B cell (primary cell): ENCODE measurements at regions of chr15 and their contacts with region 1.

Region 1: DNA sequence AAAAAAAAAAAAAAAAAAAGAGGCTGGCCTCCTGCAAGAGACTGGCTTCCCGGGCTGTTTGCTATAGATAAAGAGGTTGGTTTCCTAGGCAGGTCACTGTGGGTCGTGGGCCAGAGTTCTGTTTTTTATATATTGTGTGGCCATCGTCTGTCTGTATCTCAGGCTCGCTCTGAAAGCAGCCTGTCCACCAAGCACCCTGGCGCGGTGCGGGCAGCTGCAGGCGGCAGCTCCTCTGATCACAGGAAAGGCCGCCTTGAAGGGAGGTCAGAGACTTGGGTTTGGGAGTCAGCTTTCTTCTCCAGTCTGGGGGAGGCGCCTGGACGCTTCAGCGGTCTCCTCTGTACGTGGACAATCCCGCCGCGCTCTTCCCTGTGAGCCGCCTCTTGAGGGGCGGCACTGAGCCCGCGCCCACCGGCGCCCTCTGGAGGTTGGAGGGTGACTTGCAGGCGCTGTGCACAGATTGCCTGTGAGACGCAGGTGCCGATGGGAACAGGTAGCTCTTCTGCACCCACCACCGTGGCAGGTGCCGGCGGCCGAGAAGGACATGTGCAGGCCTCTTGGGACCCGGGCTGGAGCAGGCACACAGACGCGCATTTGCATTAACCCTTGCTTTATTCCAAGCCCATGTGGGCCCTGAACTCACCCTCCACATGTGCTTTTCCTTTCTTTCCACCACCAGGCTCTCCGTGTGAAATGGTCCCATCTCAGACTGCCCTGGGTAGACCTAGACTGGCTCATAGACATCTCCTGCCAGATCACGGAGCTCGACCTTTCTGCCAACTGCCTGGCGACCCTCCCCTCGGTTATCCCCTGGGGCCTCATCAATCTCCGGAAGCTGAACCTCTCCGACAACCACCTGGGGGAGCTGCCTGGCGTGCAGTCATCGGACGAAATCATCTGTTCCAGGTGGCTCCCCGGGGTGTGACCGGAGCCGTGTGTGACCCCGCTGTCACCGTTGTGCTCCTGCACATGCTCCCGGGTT is 89.3 kb downstream of the LRRK1 start:
- DNase-seq: peak; percentile 91
- ATAC-seq: peak; percentile 95
- H3K4me3 ChIP-seq: peak overlapping the region; percentile 16 to 78 (median 59)
- H3K4me3 Mint-ChIP-seq: peak overlapping the region; percentile 92
- H3K27ac ChIP-seq: no peak overlapping the region
- H3K27ac Mint-ChIP-seq: peak overlapping the region; percentile 42
- H3K4me1 ChIP-seq: peaks cover 10 to 20% of the 10 kb centered on the region in 2 donors
- H3K4me1 Mint-ChIP-seq: peaks cover 20% of the 10 kb centered on the region
- H3K27me3 ChIP-seq: no peaks in the 10 kb centered on the region
- H3K27me3 Mint-ChIP-seq: no peaks in the 10 kb centered on the region
- CTCF ChIP-seq: peak; percentile 96

Region 2: GRCh38 chr15:100627789-100628395 is 380.6 kb before region 1 on chr15:
- CTCF ChIA-PET with region 1: interaction called, 25 read pairs
- POLR2A ChIA-PET with region 1: no interaction called
- intact Hi-C with region 1: loop called (anchors 1 kb)
- DNase-seq: peak; percentile 81
- ATAC-seq: peak; percentile 71
- H3K4me3 ChIP-seq: no peak overlapping the region
- H3K4me3 Mint-ChIP-seq: no peak overlapping the region
- H3K27ac ChIP-seq: no peak overlapping the region
- H3K27ac Mint-ChIP-seq: no peak overlapping the region
- H3K4me1 ChIP-seq: no peaks in the 10 kb centered on the region
- H3K4me1 Mint-ChIP-seq: peaks cover 2% of the 10 kb centered on the region
- H3K27me3 ChIP-seq: no peaks in the 10 kb centered on the region
- H3K27me3 Mint-ChIP-seq: no peaks in the 10 kb centered on the region
- CTCF ChIP-seq: peak; percentile 96

Region 3: DNA sequence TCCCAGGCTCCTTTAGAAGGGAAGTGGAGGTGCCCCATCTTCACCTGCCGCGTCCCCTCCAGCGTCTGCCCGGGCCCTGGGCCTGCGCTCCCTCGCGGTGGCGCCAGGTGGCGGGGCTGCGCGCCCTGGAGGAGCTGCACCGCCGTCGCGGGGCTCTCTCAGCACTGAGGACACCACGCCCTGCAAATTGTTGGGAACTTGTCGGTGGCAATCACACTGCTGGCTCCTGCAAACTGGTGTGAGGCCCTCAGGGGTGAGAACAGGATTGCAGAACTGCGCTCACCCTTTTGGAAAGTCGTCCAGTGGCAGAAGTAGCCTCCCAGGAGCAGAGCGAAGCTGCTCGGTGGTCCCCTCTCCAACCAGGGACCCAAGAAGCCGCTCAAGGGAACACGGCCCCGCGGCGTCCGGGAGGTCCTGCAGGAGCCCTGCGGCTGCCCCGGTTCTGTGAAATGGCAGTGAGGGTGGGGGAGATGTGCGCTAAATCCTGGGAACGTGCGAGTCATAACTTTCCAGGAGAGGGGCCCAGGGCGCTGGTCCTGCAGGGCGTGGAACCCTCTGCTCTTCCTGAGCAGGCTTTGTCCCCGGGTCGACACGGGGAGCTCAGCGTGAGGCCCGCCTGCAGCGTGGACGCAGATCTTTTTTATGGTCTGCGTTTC is 90.3 kb before region 1 on chr15:
- CTCF ChIA-PET with region 1: interaction called, 807 read pairs
- POLR2A ChIA-PET with region 1: interaction called, 31 read pairs
- intact Hi-C with region 1: loop called (anchors 1 kb)
- DNase-seq: peak; percentile 84
- ATAC-seq: peak; percentile 72
- H3K4me3 ChIP-seq: peak overlapping the region; percentile 71 to 89 (median 87)
- H3K4me3 Mint-ChIP-seq: peak overlapping the region; percentile 86
- H3K27ac ChIP-seq: no peak overlapping the region
- H3K27ac Mint-ChIP-seq: peak overlapping the region; percentile 87
- H3K4me1 ChIP-seq: peaks cover 30 to 45% of the 10 kb centered on the region in 2 donors
- H3K4me1 Mint-ChIP-seq: peaks cover 39% of the 10 kb centered on the region
- H3K27me3 ChIP-seq: no peaks in the 10 kb centered on the region
- H3K27me3 Mint-ChIP-seq: peaks cover 2% of the 10 kb centered on the region
- CTCF ChIP-seq: peak; percentile 96

Region 4: DNA sequence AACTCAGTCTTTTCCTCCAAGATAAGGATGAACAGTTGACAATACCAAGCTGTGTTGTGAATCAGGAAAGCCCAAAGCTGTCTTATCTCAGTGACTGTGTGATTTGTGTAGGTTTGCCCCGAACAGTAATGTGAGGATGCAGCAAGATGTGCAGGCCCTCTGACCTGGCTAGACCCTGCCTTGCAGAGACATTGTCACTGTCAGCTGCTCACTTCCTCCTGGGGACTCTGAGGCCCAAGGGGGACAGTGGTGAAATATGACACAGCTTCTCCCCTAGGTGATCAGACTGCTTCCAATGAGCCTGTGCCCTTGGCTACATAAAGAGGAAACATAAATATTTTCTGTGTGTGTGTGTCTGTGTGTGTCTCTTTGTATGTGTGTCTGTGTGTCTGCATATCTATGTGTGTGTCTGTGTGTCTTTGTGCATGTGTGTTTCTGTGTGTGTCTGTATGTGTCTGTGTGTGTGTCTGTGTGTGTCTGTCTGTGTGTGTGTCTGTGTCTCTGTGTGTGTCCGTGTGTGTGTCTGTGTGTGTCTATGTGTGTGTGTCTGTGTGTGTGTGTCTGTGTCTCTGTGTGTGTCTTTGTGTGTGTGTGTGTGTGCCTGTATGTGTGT is 67.6 kb before region 1 on chr15:
- CTCF ChIA-PET with region 1: interaction called, 31 read pairs
- POLR2A ChIA-PET with region 1: no interaction called
- intact Hi-C with region 1: no loop called
- DNase-seq: peak; percentile 48
- ATAC-seq: peak; percentile 89
- H3K4me3 ChIP-seq: no peak overlapping the region
- H3K4me3 Mint-ChIP-seq: no peak overlapping the region
- H3K27ac ChIP-seq: peak overlapping the region; percentile 8 to 13
- H3K27ac Mint-ChIP-seq: no peak overlapping the region
- H3K4me1 ChIP-seq: peaks cover 22 to 39% of the 10 kb centered on the region in 2 donors
- H3K4me1 Mint-ChIP-seq: peaks cover 26% of the 10 kb centered on the region
- H3K27me3 ChIP-seq: no peaks in the 10 kb centered on the region
- H3K27me3 Mint-ChIP-seq: no peaks in the 10 kb centered on the region
- CTCF ChIP-seq: no peak

Region 5: GRCh38 chr15:100973351-100974111 is 34.9 kb before region 1 on chr15:
- CTCF ChIA-PET with region 1: interaction called, 25 read pairs
- POLR2A ChIA-PET with region 1: no interaction called
- intact Hi-C with region 1: no loop called
- DNase-seq: peak; percentile 35
- ATAC-seq: peak; percentile 39
- H3K4me3 ChIP-seq: peak overlapping the region in 3 of 5 experiments; percentile 9 to 21 (median 15)
- H3K4me3 Mint-ChIP-seq: peak overlapping the region; percentile 59
- H3K27ac ChIP-seq: no peak overlapping the region
- H3K27ac Mint-ChIP-seq: no peak overlapping the region
- H3K4me1 ChIP-seq: peaks cover 10 to 12% of the 10 kb centered on the region in 2 donors
- H3K4me1 Mint-ChIP-seq: peaks cover 9% of the 10 kb centered on the region
- H3K27me3 ChIP-seq: peaks cover 0 to 10% (median 4%) of the 10 kb centered on the region in 4 experiments
- H3K27me3 Mint-ChIP-seq: peaks cover 6% of the 10 kb centered on the region
- CTCF ChIP-seq: no peak

Region 6: GRCh38 chr15:101024073-101024695 is 15.7 kb after region 1 on chr15:
- CTCF ChIA-PET with region 1: interaction called, 15 read pairs
- POLR2A ChIA-PET with region 1: no interaction called
- intact Hi-C with region 1: no loop called
- DNase-seq: no peak
- ATAC-seq: no peak
- H3K4me3 ChIP-seq: no peak overlapping the region
- H3K4me3 Mint-ChIP-seq: no peak overlapping the region
- H3K27ac ChIP-seq: no peak overlapping the region
- H3K27ac Mint-ChIP-seq: no peak overlapping the region
- H3K4me1 ChIP-seq: no peaks in the 10 kb centered on the region
- H3K4me1 Mint-ChIP-seq: no peaks in the 10 kb centered on the region
- H3K27me3 ChIP-seq: no peaks in the 10 kb centered on the region
- H3K27me3 Mint-ChIP-seq: no peaks in the 10 kb centered on the region
- CTCF ChIP-seq: no peak

Region 7: DNA sequence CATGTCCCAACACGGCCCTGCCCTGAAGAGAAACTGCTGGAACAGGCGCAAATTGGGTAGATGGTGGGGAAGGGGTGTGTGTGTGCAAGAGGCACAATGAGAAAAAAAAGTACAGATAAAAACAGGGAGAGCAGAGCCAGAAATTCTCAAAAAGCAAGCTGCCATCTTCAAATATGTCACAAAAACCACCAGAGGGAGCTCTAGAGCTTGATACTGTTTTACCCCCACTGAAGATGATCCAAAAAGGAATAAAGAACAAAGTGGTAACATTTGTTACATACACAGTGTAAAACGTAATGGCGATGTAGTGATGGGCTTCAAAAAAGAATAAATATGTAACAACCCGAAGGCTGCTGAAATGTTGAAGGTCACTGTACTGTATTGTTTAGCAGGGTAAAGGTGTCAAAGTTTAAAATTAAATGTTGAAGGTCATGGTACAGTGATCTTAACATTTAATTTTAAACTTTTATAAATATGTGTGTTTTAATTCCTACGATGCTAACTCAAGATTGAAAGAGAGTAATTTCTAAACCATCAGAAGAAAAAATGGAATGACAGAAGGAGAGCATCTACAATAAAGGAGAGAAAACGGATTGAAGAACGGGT is 280.6 kb after region 1 on chr15:
- CTCF ChIA-PET with region 1: interaction called, 10 read pairs
- POLR2A ChIA-PET with region 1: no interaction called
- intact Hi-C with region 1: no loop called
- DNase-seq: peak; percentile 75
- ATAC-seq: no peak
- H3K4me3 ChIP-seq: no peak overlapping the region
- H3K4me3 Mint-ChIP-seq: no peak overlapping the region
- H3K27ac ChIP-seq: peak overlapping the region in 1 of 2 donors; percentile 4
- H3K27ac Mint-ChIP-seq: peak overlapping the region; percentile 27
- H3K4me1 ChIP-seq: peaks cover 18 to 23% of the 10 kb centered on the region in 2 donors
- H3K4me1 Mint-ChIP-seq: peaks cover 39% of the 10 kb centered on the region
- H3K27me3 ChIP-seq: no peaks in the 10 kb centered on the region
- H3K27me3 Mint-ChIP-seq: no peaks in the 10 kb centered on the region
- CTCF ChIP-seq: peak; percentile 80